ENCODE measurements at regions of chr12 and their contacts with region 1.

Region 1: DNA sequence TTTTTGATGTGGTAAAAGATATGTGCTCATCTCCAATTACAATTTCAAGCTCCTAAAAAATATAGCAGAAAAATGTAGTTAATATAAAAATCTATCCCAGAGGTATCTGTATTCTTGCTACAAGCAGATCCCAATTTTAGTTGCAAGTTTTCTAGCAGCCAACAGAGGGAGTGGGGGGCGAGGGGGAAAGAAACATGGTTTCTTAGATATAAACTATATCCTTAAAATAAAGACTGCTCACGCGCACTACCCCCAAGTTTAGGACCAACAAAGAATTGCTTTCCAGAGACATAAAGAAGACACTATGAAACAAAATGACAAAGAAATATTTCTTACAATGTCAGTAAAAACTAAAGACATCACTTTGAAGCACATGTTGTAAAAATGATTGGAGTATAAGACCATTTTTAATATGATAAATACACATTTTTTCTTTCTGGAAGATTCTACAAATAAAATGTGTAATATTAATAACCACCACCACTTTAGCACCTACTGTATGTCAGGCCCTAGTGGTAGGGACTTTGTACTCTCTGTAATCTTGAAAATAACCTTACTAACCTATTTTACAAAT is 5.4 kb downstream of the MAGOHB start:
- DNase-seq: no peak
- H3K4me3 ChIP-seq: no peak overlapping the region
- H3K27ac ChIP-seq: no peak overlapping the region
- H3K27me3 ChIP-seq: no peaks in the 10 kb centered on the region
- CTCF ChIP-seq: peak; percentile 54

Region 2: GRCh38 chr12:10469701-10470100 is 138.3 kb before region 1 on chr12:
- CTCF ChIA-PET with region 1: no interaction called
- POLR2A ChIA-PET with region 1: no interaction called
- DNase-seq: no peak
- H3K4me3 ChIP-seq: no peak overlapping the region
- H3K27ac ChIP-seq: no peak overlapping the region
- H3K27me3 ChIP-seq: no peaks in the 10 kb centered on the region
- CTCF ChIP-seq: no peak

Region 3: GRCh38 chr12:10501031-10501430 is 106.9 kb before region 1 on chr12:
- CTCF ChIA-PET with region 1: no interaction called
- POLR2A ChIA-PET with region 1: no interaction called
- DNase-seq: no peak
- H3K4me3 ChIP-seq: no peak overlapping the region
- H3K27ac ChIP-seq: no peak overlapping the region
- H3K27me3 ChIP-seq: no peaks in the 10 kb centered on the region
- CTCF ChIP-seq: no peak

Region 4: DNA sequence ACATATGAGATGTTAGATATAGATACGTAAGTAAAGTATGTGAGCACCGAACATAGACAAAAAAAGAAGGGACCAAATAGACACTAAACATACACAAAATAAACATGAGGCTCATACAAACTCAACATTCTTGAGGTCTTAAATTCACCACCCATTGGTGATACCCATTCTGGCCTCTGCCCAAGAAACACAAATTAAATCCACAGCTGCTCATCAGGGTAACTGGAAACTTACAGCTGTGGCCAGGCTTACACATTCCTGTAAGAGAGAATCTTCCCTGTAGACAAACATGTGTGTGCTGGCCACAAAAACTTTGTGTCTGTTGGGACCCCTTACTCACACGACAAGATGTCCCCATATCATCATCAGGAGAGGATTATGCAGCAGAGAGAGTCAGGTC is 17.0 kb before region 1 on chr12:
- CTCF ChIA-PET with region 1: no interaction called
- POLR2A ChIA-PET with region 1: no interaction called
- DNase-seq: no peak
- H3K4me3 ChIP-seq: no peak overlapping the region
- H3K27ac ChIP-seq: no peak overlapping the region
- H3K27me3 ChIP-seq: no peaks in the 10 kb centered on the region
- CTCF ChIP-seq: no peak

Region 5: GRCh38 chr12:10759657-10760056 is 151.7 kb after region 1 on chr12:
- CTCF ChIA-PET with region 1: interaction called, 10 read pairs
- POLR2A ChIA-PET with region 1: no interaction called
- DNase-seq: no peak
- H3K4me3 ChIP-seq: no peak overlapping the region
- H3K27ac ChIP-seq: no peak overlapping the region
- H3K27me3 ChIP-seq: peaks cover 4% of the 10 kb centered on the region
- CTCF ChIP-seq: no peak

Region 6: DNA sequence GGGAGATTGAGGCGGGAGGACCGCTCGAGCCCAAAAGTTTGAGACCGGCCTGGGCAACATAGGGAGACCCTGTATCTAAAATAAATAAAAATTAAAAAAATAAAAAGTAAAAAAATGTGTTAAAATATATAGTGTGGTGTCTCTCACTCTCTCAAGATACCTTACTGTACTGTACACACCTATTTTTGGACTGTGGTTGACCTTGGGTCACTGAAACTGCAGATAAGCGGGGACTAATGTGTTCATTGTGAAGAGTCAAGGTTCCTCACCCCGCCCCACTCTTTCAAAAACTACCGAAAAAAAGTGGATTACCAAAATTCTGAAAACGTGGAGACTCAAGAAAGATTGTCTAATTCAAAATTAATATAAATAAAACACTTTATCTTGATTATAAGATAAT is 302.4 kb after region 1 on chr12:
- CTCF ChIA-PET with region 1: no interaction called
- POLR2A ChIA-PET with region 1: no interaction called
- DNase-seq: no peak
- H3K4me3 ChIP-seq: no peak overlapping the region
- H3K27ac ChIP-seq: no peak overlapping the region
- H3K27me3 ChIP-seq: no peaks in the 10 kb centered on the region
- CTCF ChIP-seq: no peak

Measured in AG04450 (cell line).